Lower leg skin (tissue), 4 donors: ENCODE measurements at regions of chr2 and their contacts with region 1.

Region 1: DNA sequence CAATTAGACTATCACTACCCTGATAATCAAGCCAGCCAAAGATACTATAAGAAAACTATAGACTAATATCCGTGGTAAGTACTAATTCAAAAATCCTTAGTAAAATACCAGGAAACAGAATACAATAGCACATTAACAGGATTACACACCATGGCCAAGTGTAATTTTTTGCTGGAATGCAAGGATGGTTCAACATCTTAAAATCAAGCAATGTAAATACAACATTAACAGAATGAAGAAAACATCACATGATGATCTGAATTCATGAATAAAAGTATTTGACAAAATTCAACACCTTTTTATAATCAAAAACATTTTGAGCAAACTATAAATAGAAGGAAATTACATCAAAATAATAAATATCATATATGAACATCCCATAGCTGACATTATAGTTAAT is 350.7 kb upstream of the LRRTM1 start:
- DNase-seq: no peak
- H3K4me3 ChIP-seq: no peak overlapping the region
- CTCF ChIP-seq: no peak
- POLR2A ChIP-seq: no peak

Region 2: GRCh38 chr2:80621656-80622055 is 33.6 kb before region 1 on chr2:
- intact Hi-C with region 1: loop called (anchors 2 kb)
- DNase-seq: no peak
- H3K4me3 ChIP-seq: no peak overlapping the region
- CTCF ChIP-seq: no peak
- POLR2A ChIP-seq: no peak

Region 3: DNA sequence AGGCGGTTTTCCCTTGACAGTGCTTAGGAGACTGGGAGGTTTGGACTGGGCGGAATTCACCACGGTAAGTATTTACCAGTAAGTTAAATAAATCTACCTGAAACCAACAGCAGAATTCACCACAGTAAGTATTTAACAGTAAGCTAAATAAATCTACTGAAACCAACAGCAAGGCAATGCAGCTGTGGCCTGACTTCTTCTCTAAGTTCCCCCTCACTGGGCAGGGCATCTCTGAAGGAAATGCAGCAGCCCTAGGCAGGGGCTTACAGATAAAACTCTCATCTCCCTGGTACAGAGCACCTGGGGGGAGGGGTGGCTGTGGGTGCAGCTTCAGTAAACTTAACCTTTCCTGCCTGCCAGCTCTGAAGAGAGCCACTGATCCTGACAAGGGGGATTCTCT is 81.8 kb after region 1 on chr2:
- intact Hi-C with region 1: no loop called
- DNase-seq: no peak
- H3K4me3 ChIP-seq: no peak overlapping the region
- CTCF ChIP-seq: no peak
- POLR2A ChIP-seq: no peak